PC-9 (cell line): ENCODE measurements at regions of chr3 and their contacts with region 1.

Region 1: GRCh38 chr3:9047452-9048346 is 84.4 kb upstream of the RAD18 start:
- DNase-seq: no peak
- H3K4me3 ChIP-seq: no peak overlapping the region
- H3K27ac ChIP-seq: no peak overlapping the region
- H3K4me1 ChIP-seq: no peaks in the 10 kb centered on the region
- H3K27me3 ChIP-seq: no peaks in the 10 kb centered on the region
- CTCF ChIP-seq: no peak

Region 2: DNA sequence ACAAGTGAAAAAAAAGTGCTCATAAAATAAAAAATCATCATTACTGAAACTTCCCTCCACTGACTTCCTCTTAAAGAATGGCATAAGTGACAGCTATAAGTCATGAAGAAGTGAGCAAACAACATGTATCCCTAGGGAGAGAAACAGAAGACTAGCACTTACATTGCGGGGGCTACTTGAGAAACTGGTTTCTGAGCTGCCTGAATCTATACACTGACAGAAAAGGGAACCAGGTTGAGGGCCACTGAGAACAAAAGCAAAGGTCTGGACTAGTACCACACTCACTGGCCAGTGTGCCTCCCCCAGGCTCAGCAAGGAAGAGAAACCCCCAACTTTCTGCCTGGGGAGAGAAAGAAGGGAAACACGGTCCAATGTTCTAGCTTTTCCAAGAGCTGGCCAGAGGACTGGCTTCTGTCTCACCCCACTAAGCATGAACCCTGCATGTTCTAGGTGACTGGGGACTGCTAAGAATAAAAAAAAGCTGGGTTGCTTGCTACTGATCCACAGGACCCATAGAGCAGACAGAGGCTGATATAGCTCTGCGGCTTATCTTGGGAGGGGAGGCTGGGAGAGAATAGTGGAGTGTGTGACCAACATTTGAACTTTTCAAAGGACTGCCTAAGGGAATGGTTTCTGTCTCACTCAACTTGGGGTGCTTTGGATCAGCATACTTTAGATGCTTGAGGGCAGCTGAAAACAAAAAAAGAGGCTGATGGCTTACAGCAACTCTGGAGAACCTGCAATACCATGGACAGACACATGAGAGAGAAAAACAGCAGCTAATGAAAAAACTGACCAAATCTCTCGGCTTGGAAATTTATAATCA is 92.5 kb before region 1 on chr3:
- CTCF ChIA-PET with region 1: no interaction called
- POLR2A ChIA-PET with region 1: no interaction called
- intact Hi-C with region 1: no loop called
- DNase-seq: no peak
- H3K4me3 ChIP-seq: no peak overlapping the region
- H3K27ac ChIP-seq: no peak overlapping the region
- H3K4me1 ChIP-seq: no peaks in the 10 kb centered on the region
- H3K27me3 ChIP-seq: no peaks in the 10 kb centered on the region
- CTCF ChIP-seq: no peak

Region 3: GRCh38 chr3:9067352-9067975 is 19.8 kb after region 1 on chr3:
- CTCF ChIA-PET with region 1: interaction called, 15 read pairs
- POLR2A ChIA-PET with region 1: no interaction called
- intact Hi-C with region 1: no loop called
- DNase-seq: peak in 1 of 2 experiments; percentile 33
- H3K4me3 ChIP-seq: no peak overlapping the region
- H3K27ac ChIP-seq: no peak overlapping the region
- H3K4me1 ChIP-seq: no peaks in the 10 kb centered on the region
- H3K27me3 ChIP-seq: no peaks in the 10 kb centered on the region
- CTCF ChIP-seq: peak; percentile 96

Region 4: DNA sequence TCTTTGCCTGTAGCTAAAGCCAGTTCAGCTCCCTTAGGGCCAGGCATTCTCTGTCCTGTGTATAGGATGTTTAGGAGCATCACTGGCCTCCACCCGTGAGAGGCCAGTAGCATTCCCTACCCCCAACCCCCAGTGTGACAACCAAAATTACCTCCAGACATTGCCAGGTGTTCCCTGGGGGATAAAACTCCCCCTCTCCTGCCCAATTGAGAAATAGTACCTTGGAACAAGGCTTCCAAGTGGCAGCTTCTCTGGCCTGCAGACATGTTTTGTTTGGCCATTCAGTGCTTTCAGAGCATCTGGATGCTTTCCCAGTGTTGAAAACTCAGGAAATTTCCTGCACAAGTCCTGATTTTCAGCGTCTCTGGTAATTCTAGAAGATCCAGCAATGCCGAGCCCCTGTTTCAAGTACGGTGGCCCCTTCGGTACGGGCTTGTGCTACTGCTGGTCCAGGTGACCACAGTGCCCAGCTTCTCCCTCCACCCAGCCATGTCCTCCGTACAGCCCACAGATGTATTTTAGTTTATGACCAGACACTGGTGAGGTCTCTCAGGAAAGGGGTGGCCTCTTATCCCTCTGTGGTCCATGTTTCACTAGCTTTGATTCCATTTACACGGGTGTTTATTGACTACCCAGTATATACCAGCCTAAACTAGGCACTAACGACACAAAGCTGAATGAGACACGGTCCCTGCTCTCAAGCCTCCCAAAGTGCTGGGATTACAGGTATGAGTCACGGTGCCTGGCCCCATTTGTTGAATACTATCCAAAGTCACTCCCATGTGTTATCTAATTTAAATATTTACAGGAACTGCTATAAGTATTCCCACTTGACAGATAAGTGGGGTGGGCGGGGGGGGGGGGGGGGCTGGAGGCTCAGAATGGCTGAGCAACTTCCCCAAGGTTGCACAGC is 41.0 kb after region 1 on chr3:
- CTCF ChIA-PET with region 1: interaction called, 14 read pairs
- POLR2A ChIA-PET with region 1: no interaction called
- intact Hi-C with region 1: no loop called
- DNase-seq: peak in 1 of 2 experiments; percentile 33
- H3K4me3 ChIP-seq: no peak overlapping the region
- H3K27ac ChIP-seq: no peak overlapping the region
- H3K4me1 ChIP-seq: no peaks in the 10 kb centered on the region
- H3K27me3 ChIP-seq: no peaks in the 10 kb centered on the region; the same call in 1 of the 2 replicates
- CTCF ChIP-seq: no peak

Region 5: GRCh38 chr3:9098569-9099367 is 51.1 kb after region 1 on chr3:
- CTCF ChIA-PET with region 1: no interaction called
- POLR2A ChIA-PET with region 1: no interaction called
- intact Hi-C with region 1: no loop called
- DNase-seq: peak; percentile 32 to 72
- H3K4me3 ChIP-seq: no peak overlapping the region
- H3K27ac ChIP-seq: no peak overlapping the region
- H3K4me1 ChIP-seq: no peaks in the 10 kb centered on the region
- H3K27me3 ChIP-seq: no peaks in the 10 kb centered on the region; the same call in 1 of the 2 replicates
- CTCF ChIP-seq: no peak